ENCODE measurements at regions of chr1 and their contacts with region 1.

Region 1: GRCh38 chr1:236774926-236775325 is 20.2 kb upstream of the MTR start:
- DNase-seq: no peak
- ATAC-seq: peak; percentile 58 to 62 (median 60)
- H3K4me3 ChIP-seq: no peak overlapping the region
- H3K27ac ChIP-seq: no peak overlapping the region
- H3K4me1 ChIP-seq: no peaks in the 10 kb centered on the region
- H3K27me3 ChIP-seq: peaks cover 0 to 3% (median 0%) of the 10 kb centered on the region in 3 donors
- CTCF ChIP-seq: peak; percentile 49

Region 2: DNA sequence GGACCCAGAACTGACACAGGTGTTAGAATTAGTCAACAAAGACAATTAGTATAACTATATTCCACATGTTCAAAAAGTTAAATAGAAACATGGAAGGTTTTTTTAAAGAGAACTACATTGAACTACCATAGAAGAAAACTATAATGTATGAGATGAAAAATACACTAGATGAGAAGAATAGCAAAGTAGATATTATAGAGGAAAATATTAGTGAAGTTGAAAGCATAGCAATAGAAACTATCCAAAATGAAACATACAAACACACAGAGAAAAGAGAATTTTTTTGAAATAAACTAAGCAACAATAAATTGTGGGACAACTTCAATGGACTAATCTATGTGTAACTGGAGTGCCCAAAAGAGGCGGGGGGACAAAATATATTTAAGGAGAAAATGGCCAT is 162.6 kb before region 1 on chr1:
- intact Hi-C with region 1: loop called in 1 of 2 experiments (anchors 5 kb)
- DNase-seq: no peak
- ATAC-seq: no peak
- H3K4me3 ChIP-seq: no peak overlapping the region
- H3K27ac ChIP-seq: no peak overlapping the region
- H3K4me1 ChIP-seq: peaks cover 15% of the 10 kb centered on the region
- H3K27me3 ChIP-seq: no peaks in the 10 kb centered on the region
- CTCF ChIP-seq: no peak